Cardiac septum (tissue), 1 donor: ENCODE measurements at regions of chr4 and their contacts with region 1.

Region 1: GRCh38 chr4:104795264-104795939 is 300.7 kb upstream of the CXXC4 start:
- DNase-seq: no peak

Region 2: DNA sequence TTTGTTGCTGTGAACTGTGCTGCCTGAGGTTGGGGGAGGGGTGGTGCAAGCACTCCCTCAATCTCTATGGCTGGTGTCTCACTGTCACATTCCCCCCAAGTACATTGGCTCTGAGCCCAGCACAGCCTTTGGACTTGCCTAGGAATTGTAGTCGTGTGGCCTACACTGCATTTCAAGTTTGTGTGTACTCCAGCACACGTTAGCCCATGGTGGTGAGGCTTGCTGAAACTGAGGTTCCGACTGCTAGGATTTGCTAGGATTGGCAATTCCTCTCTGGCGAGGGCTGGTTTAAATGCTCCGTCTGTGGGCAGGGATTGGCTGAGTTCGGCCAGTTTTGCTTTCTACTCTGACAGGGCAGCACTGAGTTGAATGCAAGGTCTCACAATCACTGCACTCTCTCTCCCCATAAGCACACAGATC is 179.0 kb before region 1 on chr4:
- intact Hi-C with region 1: loop called (anchors 10 kb)
- DNase-seq: peak; percentile 77

Region 3: DNA sequence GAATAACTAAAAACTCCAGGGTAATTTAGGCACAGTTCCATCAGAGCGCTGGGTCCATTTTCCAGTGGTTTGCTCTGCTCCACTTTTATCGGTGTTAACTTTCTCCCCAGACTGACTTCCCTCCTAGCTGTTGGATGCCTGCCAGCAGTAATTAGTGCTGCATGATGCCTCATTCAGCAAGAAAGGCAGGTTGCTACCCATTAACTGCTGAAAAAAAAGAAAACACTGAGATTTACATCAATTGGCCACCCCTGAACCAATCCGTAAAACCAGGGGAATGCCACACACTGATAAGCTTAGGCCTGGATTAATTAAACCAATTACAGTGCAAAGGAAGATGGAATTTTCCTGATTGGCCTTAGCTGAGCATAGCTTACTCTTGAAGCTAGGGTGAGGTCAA is 118.3 kb before region 1 on chr4:
- intact Hi-C with region 1: no loop called
- DNase-seq: no peak

Region 4: DNA sequence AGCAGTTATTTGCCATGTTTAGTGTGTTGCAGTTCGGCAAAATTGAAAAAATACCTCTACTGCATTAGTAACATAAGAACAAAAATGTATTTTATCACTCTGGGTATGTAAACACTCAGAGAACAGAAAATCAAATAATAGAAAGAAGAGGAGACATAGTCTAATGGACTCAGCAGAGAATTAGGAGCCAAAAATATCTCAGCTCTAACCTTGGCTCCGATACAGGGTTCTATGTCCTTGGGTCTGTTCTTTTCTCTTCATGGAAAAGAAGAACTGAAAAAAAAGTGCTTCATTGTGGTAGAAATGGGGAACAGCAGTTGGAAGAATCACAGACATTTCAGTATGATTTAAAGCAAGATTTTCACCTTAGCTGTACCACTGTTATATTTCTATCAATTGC is 60.2 kb before region 1 on chr4:
- intact Hi-C with region 1: loop called (anchors 10 kb)
- DNase-seq: no peak